HepG2 (cell line): ENCODE measurements at regions of chr7 and their contacts with region 1.

Region 1: GRCh38 chr7:6106140-6106904 is 75.1 kb downstream of the ANKRD61 start:
- DNase-seq: peak; percentile 64
- ATAC-seq: peak; percentile 32
- H3K4me3 ChIP-seq: peak overlapping the region; percentile 98 to 100 (median 99)
- H3K27ac ChIP-seq: peak overlapping the region; percentile 82
- H3K4me1 ChIP-seq: peaks cover 39% of the 10 kb centered on the region
- H3K27me3 ChIP-seq: peaks cover 0 to 3% of the 10 kb centered on the region in 2 experiments; a peak in 1 of 5 replicates
- CTCF ChIP-seq: peak; percentile 89
- EP300 ChIP-seq: no peak
- POLR2A ChIP-seq: no peak
- RAD21 ChIP-seq: peak; percentile 64; the same call in 1 of the 2 replicates

Region 2: GRCh38 chr7:5997222-5997808 is 109.0 kb before region 1 on chr7:
- CTCF ChIA-PET with region 1: interaction called, 16 read pairs
- POLR2A ChIA-PET with region 1: interaction called, 7 read pairs
- in situ Hi-C with region 1: no loop called
- intact Hi-C with region 1: loop called (anchors 1 kb)
- DNase-seq: peak; percentile 66
- ATAC-seq: peak; percentile 77
- H3K4me3 ChIP-seq: no peak overlapping the region
- H3K27ac ChIP-seq: no peak overlapping the region
- H3K4me1 ChIP-seq: no peaks in the 10 kb centered on the region
- H3K27me3 ChIP-seq: no peaks in the 10 kb centered on the region
- CTCF ChIP-seq: peak; percentile 65
- EP300 ChIP-seq: no peak
- POLR2A ChIP-seq: no peak
- RAD21 ChIP-seq: peak; percentile 49; the same call in 1 of the 2 replicates

Region 3: DNA sequence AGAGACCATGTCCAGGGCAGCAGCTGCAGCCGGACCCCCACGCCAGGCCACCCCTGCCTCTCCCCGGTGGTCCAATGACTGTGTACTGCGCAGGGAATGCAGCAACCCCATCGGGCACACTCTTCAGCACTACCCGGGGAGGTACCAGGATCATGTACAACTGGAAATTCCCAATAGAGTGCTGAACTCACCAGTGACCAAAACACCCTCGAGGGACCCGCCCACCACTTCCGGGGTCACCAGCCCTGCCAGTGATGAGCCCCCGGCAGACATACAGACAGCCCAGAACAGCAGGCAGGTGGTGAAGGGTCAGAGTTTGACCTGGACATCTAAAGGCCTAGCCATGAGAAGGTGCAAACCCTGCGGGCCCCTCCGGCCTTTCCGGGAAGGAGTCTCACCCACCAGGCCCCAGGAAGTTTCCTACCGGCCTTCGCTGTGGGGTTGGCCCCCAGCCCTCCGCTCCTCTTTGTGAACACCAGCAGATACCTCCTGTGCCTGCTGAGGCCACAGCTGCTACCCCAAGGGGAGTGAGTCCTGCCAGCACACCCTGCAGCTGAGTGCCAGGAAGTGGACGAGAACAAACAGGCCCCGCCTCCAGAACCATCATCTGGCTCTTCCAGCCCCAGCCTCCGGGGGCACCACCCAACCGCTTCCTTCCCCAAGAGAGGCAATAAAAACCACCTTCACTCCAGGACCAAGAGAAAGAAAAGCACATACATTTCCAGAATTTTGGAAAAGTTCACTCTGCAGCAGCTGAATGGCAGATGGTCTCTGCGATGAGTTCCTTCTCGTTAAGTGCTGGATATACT is 80.1 kb before region 1 on chr7:
- CTCF ChIA-PET with region 1: no interaction called
- POLR2A ChIA-PET with region 1: no interaction called
- in situ Hi-C with region 1: no loop called
- intact Hi-C with region 1: loop called (anchors 1 kb)
- DNase-seq: peak; percentile 64
- ATAC-seq: peak; percentile 92
- H3K4me3 ChIP-seq: no peak overlapping the region
- H3K27ac ChIP-seq: no peak overlapping the region
- H3K4me1 ChIP-seq: no peaks in the 10 kb centered on the region
- H3K27me3 ChIP-seq: no peaks in the 10 kb centered on the region
- CTCF ChIP-seq: peak; percentile 58
- EP300 ChIP-seq: no peak
- POLR2A ChIP-seq: no peak
- RAD21 ChIP-seq: peak; percentile 67